IMR-90 (cell line): ENCODE measurements at regions of chr22 and their contacts with region 1.

Region 1: DNA sequence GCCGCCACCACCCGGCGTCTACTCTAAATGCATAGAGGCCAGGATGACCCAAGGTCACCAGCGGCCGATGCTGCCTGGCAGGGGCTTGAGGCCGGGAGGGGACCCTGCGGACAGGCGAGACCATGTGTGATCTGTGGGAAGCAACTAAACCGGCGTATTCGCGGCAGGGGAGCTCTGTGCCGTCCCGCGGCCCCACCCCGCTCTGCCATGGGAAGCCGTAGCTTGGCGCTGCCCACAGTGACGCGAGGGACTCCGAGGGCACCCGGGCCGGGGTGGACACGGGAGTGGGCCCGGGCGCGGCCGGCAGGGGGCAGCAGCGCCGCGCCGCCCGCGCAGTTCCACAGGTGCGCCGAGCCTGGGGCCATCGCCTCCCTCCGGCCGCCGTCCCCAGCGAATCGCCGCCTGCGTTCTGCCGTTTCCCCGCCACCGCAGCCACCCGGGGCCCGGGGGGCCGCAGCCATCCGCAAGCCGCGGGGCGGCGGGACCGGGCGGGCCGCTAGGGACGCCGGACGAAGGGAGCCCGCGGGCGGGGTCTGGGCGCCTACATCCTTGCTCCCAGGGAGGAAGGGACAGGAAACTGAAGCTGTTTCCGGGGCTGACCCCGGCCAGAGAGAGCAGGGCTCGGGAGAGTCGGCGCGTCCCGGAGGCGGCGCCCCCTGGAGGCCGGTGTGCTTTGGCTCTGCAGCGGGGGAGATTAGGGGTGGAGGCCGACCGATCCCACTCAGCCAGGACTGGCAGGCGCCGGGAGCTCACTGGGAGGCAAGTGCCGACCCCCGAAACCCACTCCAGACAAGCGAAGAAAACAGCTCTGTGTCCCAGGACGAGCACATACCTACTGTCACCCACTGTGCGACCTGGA is 12.5 kb upstream of the HDHD5 start:
- DNase-seq: peak; percentile 85
- ATAC-seq: peak; percentile 97
- H3K4me3 ChIP-seq: peak overlapping the region; percentile 74
- H3K27ac ChIP-seq: peak overlapping the region; percentile 83
- H3K4me1 ChIP-seq: no peaks in the 10 kb centered on the region
- H3K27me3 ChIP-seq: peaks cover 2% of the 10 kb centered on the region; the same call in 1 of the 2 replicates
- CTCF ChIP-seq: peak; percentile 81
- POLR2A ChIP-seq: no peak; the same call in 1 of the 2 replicates
- RAD21 ChIP-seq: peak; percentile 48

Region 2: DNA sequence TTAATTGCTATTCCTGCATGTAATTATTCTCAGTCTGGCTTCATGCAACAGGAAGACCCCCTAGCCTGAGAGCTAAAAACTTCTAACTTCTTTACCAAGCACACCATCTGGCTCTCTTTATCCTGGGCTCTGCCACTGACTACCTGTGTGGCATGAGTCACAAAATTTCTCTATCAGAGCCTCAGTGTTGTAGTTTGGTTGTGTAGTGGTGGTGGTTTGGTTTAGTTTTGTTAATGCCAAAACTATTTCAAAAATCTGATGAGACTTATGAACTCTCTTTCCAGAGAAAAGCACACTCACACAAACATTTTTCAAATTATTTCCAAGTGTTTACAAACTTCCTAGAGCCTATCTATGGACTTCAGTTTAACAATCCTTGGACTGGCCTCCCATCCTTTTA is 94.3 kb before region 1 on chr22:
- CTCF ChIA-PET with region 1: interaction called, 24 read pairs
- POLR2A ChIA-PET with region 1: no interaction called
- dilution Hi-C with region 1: no loop called
- in situ Hi-C with region 1: loop called (anchors 10 kb)
- intact Hi-C with region 1: loop called (anchors 1 kb)
- DNase-seq: peak; percentile 88
- ATAC-seq: peak; percentile 83
- H3K4me3 ChIP-seq: no peak overlapping the region
- H3K27ac ChIP-seq: no peak overlapping the region
- H3K4me1 ChIP-seq: peaks cover 8% of the 10 kb centered on the region
- H3K27me3 ChIP-seq: no peaks in the 10 kb centered on the region; the same call in 1 of the 2 replicates
- CTCF ChIP-seq: no peak
- POLR2A ChIP-seq: no peak
- RAD21 ChIP-seq: no peak

Region 3: GRCh38 chr22:17121227-17122195 is 50.0 kb before region 1 on chr22 and contains the start of gene TMEM121B:
- CTCF ChIA-PET with region 1: interaction called, 12 read pairs
- POLR2A ChIA-PET with region 1: no interaction called
- dilution Hi-C with region 1: no loop called
- in situ Hi-C with region 1: no loop called
- intact Hi-C with region 1: no loop called
- DNase-seq: peak; percentile 59
- ATAC-seq: peak; percentile 81
- H3K4me3 ChIP-seq: peak within 1 kb of the TSS; percentile 47
- H3K27ac ChIP-seq: no peak within 1 kb of the TSS
- H3K4me1 ChIP-seq: no peaks in the 10 kb centered on the region
- H3K27me3 ChIP-seq: peaks cover 26% of the 10 kb centered on the region
- CTCF ChIP-seq: no peak
- POLR2A ChIP-seq: no peak
- RAD21 ChIP-seq: no peak
- total RNA-seq, gene TMEM121B: under 0.01 TPM in 2 replicates

Region 4: DNA sequence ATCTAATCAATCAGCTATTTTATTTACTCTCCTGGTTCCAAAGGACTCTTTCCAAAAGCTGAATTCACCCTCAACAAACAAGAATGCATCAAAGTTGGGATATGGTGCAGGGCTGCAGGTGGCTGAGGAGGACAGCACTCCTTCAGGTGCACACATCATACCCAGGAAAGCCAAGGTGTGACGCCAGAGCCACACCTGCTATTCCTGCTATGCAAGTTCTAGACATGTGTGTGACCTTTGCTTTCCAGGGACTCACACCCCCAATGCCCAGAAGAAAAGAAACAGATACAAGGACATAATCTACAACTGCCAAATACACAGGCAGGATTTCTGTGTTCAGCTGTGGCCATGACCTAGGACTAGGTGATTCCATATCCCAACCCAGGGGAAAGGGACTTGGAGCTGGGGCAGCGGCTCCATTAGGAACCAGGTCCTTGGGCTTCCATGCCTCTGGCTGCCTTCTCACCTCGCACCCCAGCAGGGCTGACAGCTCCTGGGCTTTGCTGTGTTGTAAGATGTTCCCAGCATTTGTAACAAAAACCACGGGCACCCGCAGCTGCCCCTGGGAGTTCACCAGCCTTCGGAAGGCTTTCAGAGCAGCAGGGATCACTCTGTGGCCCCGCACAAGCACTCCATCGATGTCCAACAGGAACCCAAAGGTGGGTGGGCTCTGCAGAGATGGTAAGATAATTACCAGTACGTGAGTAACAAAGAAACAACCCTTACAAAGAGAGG is 22.3 kb before region 1 on chr22:
- CTCF ChIA-PET with region 1: interaction called, 11 read pairs
- POLR2A ChIA-PET with region 1: no interaction called
- dilution Hi-C with region 1: no loop called
- in situ Hi-C with region 1: no loop called
- intact Hi-C with region 1: no loop called
- DNase-seq: no peak
- ATAC-seq: no peak
- H3K4me3 ChIP-seq: no peak overlapping the region
- H3K27ac ChIP-seq: no peak overlapping the region
- H3K4me1 ChIP-seq: no peaks in the 10 kb centered on the region
- H3K27me3 ChIP-seq: no peaks in the 10 kb centered on the region
- CTCF ChIP-seq: no peak
- POLR2A ChIP-seq: no peak
- RAD21 ChIP-seq: no peak

Region 5: GRCh38 chr22:17158568-17159503 is 12.7 kb before region 1 on chr22 and contains the start of gene HDHD5:
- CTCF ChIA-PET with region 1: interaction called, 21 read pairs
- POLR2A ChIA-PET with region 1: no interaction called
- dilution Hi-C with region 1: no loop called
- in situ Hi-C with region 1: no loop called
- intact Hi-C with region 1: loop called (anchors 1 kb)
- DNase-seq: peak; percentile 82
- ATAC-seq: peak; percentile 90
- H3K4me3 ChIP-seq: peak within 1 kb of the TSS; percentile 61
- H3K27ac ChIP-seq: peak within 1 kb of the TSS; percentile 85
- H3K4me1 ChIP-seq: peaks cover 4% of the 10 kb centered on the region; the same call in 1 of the 2 replicates
- H3K27me3 ChIP-seq: no peaks in the 10 kb centered on the region
- CTCF ChIP-seq: no peak
- POLR2A ChIP-seq: no peak
- RAD21 ChIP-seq: no peak
- total RNA-seq, gene HDHD5: 31.4 and 31.9 TPM in 2 replicates

Region 6: GRCh38 chr22:17501679-17502285 is 330.2 kb after region 1 on chr22:
- CTCF ChIA-PET with region 1: interaction called, 18 read pairs
- POLR2A ChIA-PET with region 1: no interaction called
- dilution Hi-C with region 1: no loop called
- in situ Hi-C with region 1: no loop called
- intact Hi-C with region 1: loop called (anchors 1 kb)
- DNase-seq: peak; percentile 66
- ATAC-seq: peak; percentile 93
- H3K4me3 ChIP-seq: no peak overlapping the region
- H3K27ac ChIP-seq: no peak overlapping the region
- H3K4me1 ChIP-seq: no peaks in the 10 kb centered on the region
- H3K27me3 ChIP-seq: no peaks in the 10 kb centered on the region; the same call in none of the 2 replicates
- CTCF ChIP-seq: peak; percentile 75
- POLR2A ChIP-seq: no peak
- RAD21 ChIP-seq: peak; percentile 83

Region 7: GRCh38 chr22:17562906-17563870 is 391.6 kb after region 1 on chr22 and contains the start of gene SLC25A18:
- CTCF ChIA-PET with region 1: interaction called, 4 read pairs
- POLR2A ChIA-PET with region 1: interaction called, 10 read pairs
- dilution Hi-C with region 1: no loop called
- in situ Hi-C with region 1: no loop called
- intact Hi-C with region 1: no loop called
- DNase-seq: no peak
- ATAC-seq: no peak
- H3K4me3 ChIP-seq: no peak within 1 kb of the TSS
- H3K27ac ChIP-seq: no peak within 1 kb of the TSS
- H3K4me1 ChIP-seq: no peaks in the 10 kb centered on the region
- H3K27me3 ChIP-seq: peaks cover 5% of the 10 kb centered on the region
- CTCF ChIP-seq: no peak
- POLR2A ChIP-seq: no peak
- RAD21 ChIP-seq: no peak
- total RNA-seq, gene SLC25A18: under 0.01 TPM in 1 of 2 replicates, not detected in the other